ENCODE measurements at regions of chr11 and their contacts with region 1.

Region 1: DNA sequence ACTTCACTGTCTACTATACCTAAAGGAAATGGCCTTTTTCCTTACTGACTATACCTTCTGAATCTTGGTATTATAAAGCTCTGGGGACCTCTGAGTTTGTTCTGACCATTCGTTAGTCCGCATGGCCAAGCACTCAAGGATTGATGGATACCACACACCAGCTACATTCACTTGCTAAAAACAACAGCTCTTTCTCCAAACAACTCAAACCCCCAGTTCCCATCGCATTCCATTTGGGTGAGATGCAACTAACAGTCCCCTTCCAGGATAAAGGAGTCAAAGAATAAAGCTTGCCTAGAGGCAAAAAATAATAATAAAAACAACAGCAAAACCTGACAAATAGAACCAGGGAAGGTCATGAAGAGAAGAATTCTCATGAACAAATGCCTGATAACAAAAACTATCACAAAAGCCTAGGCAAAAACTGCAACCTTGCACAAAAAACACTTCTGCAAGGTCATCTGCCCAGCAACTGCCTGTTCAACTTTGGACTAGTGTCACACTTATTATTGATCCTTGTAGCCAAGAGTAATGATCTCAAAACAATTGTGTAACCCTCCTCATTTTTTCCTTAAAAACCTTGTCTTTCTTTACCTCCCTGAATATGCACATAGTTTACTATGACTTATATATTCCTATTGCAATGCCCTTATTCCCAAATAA is 139.0 kb upstream of the GUCY1A2 start:
- DNase-seq: no peak
- ATAC-seq: peak; percentile 72
- H3K4me3 ChIP-seq: no peak overlapping the region
- H3K27ac ChIP-seq: peak overlapping the region; percentile 35
- H3K4me1 ChIP-seq: peaks cover 16% of the 10 kb centered on the region
- H3K27me3 ChIP-seq: no peaks in the 10 kb centered on the region
- CTCF ChIP-seq: no peak
- EP300 ChIP-seq: 0 out of 4 replicates have a peak, but pooled peaks of 1 of the 2 experiments have one; percentile 30
- POLR2A ChIP-seq: no peak
- RAD21 ChIP-seq: no peak

Region 2: DNA sequence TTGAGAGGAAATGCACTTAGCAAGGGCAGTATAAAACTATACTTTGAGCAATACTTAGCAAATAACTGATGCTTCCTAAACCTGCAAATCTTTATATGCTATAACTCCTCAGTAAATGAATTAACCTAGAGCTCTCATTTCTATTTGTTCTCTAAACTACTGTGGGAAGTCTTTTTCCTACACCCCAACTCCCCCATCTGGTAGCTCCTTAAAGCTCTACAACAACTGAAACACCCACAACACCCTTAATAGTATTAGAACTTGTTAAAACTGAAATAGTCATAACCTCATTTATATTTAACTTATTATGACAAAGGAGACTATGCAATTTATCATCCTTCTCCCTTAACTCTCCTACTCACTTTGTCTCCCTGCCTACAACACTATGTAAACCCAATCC is 182.4 kb before region 1 on chr11:
- CTCF ChIA-PET with region 1: no interaction called
- POLR2A ChIA-PET with region 1: no interaction called
- in situ Hi-C with region 1: no loop called
- intact Hi-C with region 1: no loop called
- DNase-seq: no peak
- ATAC-seq: no peak
- H3K4me3 ChIP-seq: no peak overlapping the region
- H3K27ac ChIP-seq: no peak overlapping the region
- H3K4me1 ChIP-seq: no peaks in the 10 kb centered on the region
- H3K27me3 ChIP-seq: no peaks in the 10 kb centered on the region
- CTCF ChIP-seq: no peak
- EP300 ChIP-seq: no peak
- POLR2A ChIP-seq: no peak
- RAD21 ChIP-seq: no peak

Region 3: GRCh38 chr11:107182988-107183387 is 25.7 kb after region 1 on chr11:
- CTCF ChIA-PET with region 1: no interaction called
- POLR2A ChIA-PET with region 1: no interaction called
- in situ Hi-C with region 1: no loop called
- intact Hi-C with region 1: no loop called
- DNase-seq: no peak
- ATAC-seq: no peak
- H3K4me3 ChIP-seq: no peak overlapping the region
- H3K27ac ChIP-seq: no peak overlapping the region
- H3K4me1 ChIP-seq: no peaks in the 10 kb centered on the region
- H3K27me3 ChIP-seq: no peaks in the 10 kb centered on the region; a peak in 1 of 5 replicates
- CTCF ChIP-seq: no peak
- EP300 ChIP-seq: no peak
- POLR2A ChIP-seq: no peak
- RAD21 ChIP-seq: no peak

Region 4: DNA sequence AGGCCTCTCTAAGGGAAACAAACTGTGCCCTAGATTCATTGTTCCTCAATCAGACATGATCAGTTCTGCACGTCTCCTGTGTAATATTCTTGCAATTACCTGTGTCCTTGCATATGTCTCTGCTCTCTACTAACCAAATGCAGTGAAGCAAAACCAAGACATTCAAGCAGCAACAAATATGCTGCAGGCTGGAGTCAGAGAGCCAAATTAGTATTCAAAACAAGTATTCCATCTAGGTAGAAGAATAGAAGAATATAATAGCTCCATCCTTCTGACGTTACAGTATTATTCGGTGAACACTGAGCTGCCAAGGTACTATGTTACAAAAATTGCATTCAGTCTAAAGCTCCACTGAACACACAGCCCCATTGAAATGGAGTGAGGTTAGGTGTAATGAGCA is 502.8 kb after region 1 on chr11:
- CTCF ChIA-PET with region 1: no interaction called
- POLR2A ChIA-PET with region 1: no interaction called
- in situ Hi-C with region 1: no loop called
- intact Hi-C with region 1: loop called (anchors 5 kb)
- DNase-seq: no peak
- ATAC-seq: no peak
- H3K4me3 ChIP-seq: no peak overlapping the region
- H3K27ac ChIP-seq: no peak overlapping the region
- H3K4me1 ChIP-seq: no peaks in the 10 kb centered on the region
- H3K27me3 ChIP-seq: peaks cover 0 to 10% of the 10 kb centered on the region in 2 experiments; a peak in 3 of 5 replicates
- CTCF ChIP-seq: no peak
- EP300 ChIP-seq: no peak
- POLR2A ChIP-seq: no peak
- RAD21 ChIP-seq: no peak

Measured in HepG2 (cell line).